Right lobe of liver (tissue), 6 donors: ENCODE measurements at regions of chr17 and their contacts with region 1.

Region 1: DNA sequence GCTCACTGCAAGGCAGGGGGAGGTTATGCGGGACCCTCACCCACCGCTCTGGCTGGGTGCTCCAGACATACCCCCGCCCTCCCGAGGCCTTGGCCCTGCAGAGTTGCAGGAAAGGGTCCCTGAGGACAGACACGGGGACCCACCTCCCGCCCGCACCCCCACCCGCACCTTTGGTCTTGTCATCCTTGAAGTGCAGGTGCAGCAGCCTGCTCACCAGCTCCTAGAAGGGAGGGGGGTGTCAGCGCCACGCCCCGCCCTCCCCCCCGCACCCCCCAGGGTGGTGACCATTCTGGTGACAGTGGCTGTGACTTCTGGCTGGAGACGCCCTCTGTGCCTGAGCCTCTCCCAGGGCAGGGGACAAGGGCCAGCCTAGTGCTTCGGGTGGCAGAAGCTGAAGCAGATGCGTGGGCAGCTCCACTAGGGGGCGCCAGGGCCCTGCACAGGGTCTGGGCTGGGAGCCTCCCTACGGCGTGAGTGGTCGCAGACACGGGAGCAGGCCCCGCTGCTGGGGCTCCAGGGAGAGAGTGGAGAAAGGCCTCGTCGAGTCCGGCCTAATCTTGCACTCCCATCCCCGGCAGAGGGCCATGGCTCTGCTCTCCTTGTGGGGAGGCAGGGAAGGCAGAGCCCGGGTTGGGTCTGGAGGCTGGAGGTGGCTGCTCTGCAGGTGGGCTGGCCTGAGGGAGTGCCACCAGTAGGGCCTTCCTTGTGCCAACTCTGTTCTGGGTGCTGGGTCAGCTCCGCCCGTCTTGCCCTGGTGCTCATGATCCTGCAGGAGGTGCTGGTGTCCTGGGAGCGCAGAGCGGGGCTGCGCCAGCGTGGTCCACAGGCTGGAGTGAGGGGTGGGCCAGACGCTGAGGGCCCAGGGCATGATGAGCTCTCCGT is 2.7 kb downstream of the CENPX start:
- DNase-seq: peak; percentile 65 to 80 (median 79)
- ATAC-seq: peak in 2 of 4 donors; percentile 5 to 20
- H3K4me3 ChIP-seq: no peak overlapping the region
- H3K27ac ChIP-seq: no peak overlapping the region
- H3K4me1 ChIP-seq: peaks cover 0 to 26% (median 7%) of the 10 kb centered on the region in 4 donors
- H3K27me3 ChIP-seq: no peaks in the 10 kb centered on the region
- CTCF ChIP-seq: peak; percentile 56 to 75 (median 70)
- POLR2A ChIP-seq: no peak

Region 2: DNA sequence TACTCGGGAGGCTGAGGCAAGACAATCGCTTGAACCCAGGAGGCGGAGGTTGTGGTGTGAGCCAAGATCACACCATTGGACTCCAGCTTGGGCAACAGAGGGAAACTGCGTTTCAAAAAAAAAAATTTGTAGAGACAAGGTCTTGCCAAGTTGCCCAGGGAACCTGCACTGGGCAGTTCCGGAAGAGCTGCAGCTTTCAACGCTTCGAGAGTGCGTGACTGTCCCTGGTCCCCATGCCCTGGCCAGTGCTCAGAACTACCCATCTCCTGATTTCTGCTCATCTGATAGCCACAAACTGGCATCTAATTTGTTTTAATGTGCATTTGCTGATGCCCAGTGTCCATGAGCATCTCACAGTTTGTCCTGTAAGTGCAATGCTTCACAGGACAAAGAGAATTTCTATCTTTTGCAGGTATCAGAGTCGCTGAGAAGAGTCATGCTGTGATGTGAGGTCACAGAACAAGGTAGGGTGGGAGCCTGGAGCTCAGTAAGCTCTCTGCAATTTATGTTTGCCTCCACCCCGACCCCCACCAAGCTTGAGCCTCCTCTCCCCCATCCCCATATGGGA is 511.2 kb before region 1 on chr17:
- intact Hi-C with region 1: no loop called
- DNase-seq: peak in 1 of 3 donors; percentile 35
- ATAC-seq: peak in 3 of 4 donors; percentile 9 to 33 (median 24)
- H3K4me3 ChIP-seq: peak overlapping the region in 1 of 3 donors; percentile 91
- H3K27ac ChIP-seq: peak overlapping the region in 1 of 3 donors; percentile 99
- H3K4me1 ChIP-seq: peaks cover 0 to 33% (median 4%) of the 10 kb centered on the region in 4 donors
- H3K27me3 ChIP-seq: no peaks in the 10 kb centered on the region
- CTCF ChIP-seq: no peak
- POLR2A ChIP-seq: peak; percentile 59

Region 3: GRCh38 chr17:81885869-81886549 is 133.9 kb before region 1 on chr17:
- intact Hi-C with region 1: loop called in 1 of 2 experiments (anchors 10 kb)
- DNase-seq: no peak
- ATAC-seq: peak in 1 of 4 donors; percentile 17
- H3K4me3 ChIP-seq: no peak overlapping the region
- H3K27ac ChIP-seq: no peak overlapping the region
- H3K4me1 ChIP-seq: peaks cover 0 to 12% (median 5%) of the 10 kb centered on the region in 4 donors
- H3K27me3 ChIP-seq: no peaks in the 10 kb centered on the region
- CTCF ChIP-seq: no peak
- POLR2A ChIP-seq: no peak

Region 4: GRCh38 chr17:81917565-81918332 is 102.2 kb before region 1 on chr17 and contains the start of gene SIRT7:
- intact Hi-C with region 1: no loop called
- DNase-seq: peak; percentile 81 to 86 (median 85)
- ATAC-seq: peak; percentile 68 to 83 (median 74)
- H3K4me3 ChIP-seq: peak within 1 kb of the TSS; percentile 83 to 89 (median 87)
- H3K27ac ChIP-seq: peak within 1 kb of the TSS in 2 of 3 donors; percentile 44 to 60
- H3K4me1 ChIP-seq: peaks cover 0 to 49% (median 20%) of the 10 kb centered on the region in 4 donors
- H3K27me3 ChIP-seq: no peaks in the 10 kb centered on the region
- CTCF ChIP-seq: no peak
- POLR2A ChIP-seq: peak; percentile 64
- total RNA-seq, gene SIRT7: 7.4 to 15.0 (median 12.2) TPM

Region 5: DNA sequence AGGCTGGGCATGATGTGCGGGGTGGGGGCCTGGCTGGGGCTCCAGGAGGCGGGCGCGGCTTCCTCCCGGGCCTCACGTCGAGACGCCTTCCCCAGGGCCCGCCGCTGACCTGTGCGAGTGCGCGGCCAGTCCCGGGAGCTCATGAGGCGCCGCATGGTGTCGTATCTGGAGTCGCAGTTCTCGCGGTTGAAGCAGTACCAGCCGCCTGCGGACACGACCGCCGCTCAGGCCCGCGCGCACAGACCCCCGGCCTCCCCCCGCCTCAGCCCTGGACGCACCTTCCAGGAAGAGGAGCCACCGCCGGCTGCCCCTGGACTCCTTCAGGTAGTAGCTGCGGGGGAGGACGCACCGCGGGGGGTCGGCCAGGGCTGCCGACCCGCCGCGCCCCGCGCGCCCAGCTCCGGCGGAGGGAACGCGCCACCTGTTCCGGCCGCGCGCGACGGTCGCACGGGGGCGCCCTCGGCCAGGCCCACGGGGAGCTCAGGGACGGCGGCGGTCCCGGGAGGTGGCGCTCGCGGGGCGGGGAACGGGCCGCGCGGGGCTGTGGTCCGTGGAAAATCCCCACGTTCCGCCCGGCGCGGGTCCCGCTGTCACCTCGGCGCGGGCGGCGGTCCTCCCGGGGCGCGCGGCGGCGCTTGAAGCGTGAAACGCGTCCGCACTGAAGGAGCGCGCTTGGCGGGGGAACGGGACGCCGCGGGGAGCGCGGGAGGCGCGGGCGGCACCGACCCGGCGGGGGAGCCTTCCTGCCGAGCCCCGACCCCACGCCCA is 60.4 kb before region 1 on chr17:
- intact Hi-C with region 1: loop called (anchors 5 kb)
- DNase-seq: peak; percentile 83 to 85 (median 84)
- ATAC-seq: peak; percentile 76 to 92 (median 85)
- H3K4me3 ChIP-seq: peak overlapping the region; percentile 43 to 70 (median 64)
- H3K27ac ChIP-seq: peak overlapping the region in 2 of 3 donors; percentile 10 to 37
- H3K4me1 ChIP-seq: peaks cover 0 to 14% (median 0%) of the 10 kb centered on the region in 4 donors
- H3K27me3 ChIP-seq: no peaks in the 10 kb centered on the region
- CTCF ChIP-seq: peak; percentile 63 to 100 (median 86)
- POLR2A ChIP-seq: no peak

Region 6: GRCh38 chr17:82110298-82110697 is 90.4 kb after region 1 on chr17:
- intact Hi-C with region 1: no loop called
- DNase-seq: peak in 1 of 3 donors; percentile 77
- ATAC-seq: peak; percentile 34 to 49 (median 46)
- H3K4me3 ChIP-seq: no peak overlapping the region
- H3K27ac ChIP-seq: peak overlapping the region; percentile 20 to 99 (median 99)
- H3K4me1 ChIP-seq: peaks cover 0 to 94% (median 46%) of the 10 kb centered on the region in 4 donors
- H3K27me3 ChIP-seq: no peaks in the 10 kb centered on the region
- CTCF ChIP-seq: no peak
- POLR2A ChIP-seq: peak; percentile 42